GM12878 (cell line): ENCODE measurements at regions of chrX and their contacts with region 1.

Region 1: DNA sequence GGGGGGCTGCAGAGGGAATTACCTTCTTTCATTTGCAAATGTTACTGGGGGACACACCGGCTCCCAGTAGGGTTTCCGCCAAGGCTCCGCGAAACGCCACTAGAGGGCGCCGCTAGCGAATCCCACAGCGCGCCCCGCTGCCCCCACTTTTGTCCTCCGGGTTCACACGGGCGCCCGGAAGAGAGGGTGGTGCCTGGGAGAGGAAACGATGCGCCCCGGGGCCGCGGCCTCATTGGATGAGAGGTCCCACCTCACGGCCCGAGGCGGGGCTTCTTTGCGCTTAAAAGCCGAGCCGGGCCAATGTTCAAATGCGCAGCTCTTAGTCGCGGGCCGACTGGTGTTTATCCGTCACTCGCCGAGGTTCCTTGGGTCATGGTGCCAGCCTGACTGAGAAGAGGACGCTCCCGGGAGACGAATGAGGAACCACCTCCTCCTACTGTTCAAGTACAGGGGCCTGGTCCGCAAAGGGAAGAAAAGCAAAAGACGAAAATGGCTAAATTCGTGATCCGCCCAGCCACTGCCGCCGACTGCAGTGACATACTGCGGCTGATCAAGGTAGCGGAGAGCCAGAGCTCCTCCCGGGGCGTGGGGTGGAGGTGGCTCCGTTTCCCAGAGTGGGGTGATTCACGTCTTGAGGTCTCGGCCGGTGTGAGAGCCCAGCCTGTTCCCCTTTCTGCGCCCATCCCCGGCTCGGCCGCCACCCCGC is at the start of gene SAT1:
- DNase-seq: peak; percentile 65
- ATAC-seq: peak; percentile 88
- H3K4me3 ChIP-seq: peak within 1 kb of the TSS; percentile 75
- H3K27ac ChIP-seq: peak within 1 kb of the TSS; percentile 82
- H3K4me1 ChIP-seq: no peaks in the 10 kb centered on the region
- H3K27me3 ChIP-seq: no peaks in the 10 kb centered on the region
- CTCF ChIP-seq: peak; percentile 64 to 74 (median 65)
- EP300 ChIP-seq: no peak
- POLR2A ChIP-seq: peak; percentile 100
- RAD21 ChIP-seq: peak; percentile 65
- polyA plus RNA-seq, gene SAT1: 155 to 162 TPM

Region 2: GRCh38 chrX:23742697-23743622 is 40.1 kb before region 1 on chrX and contains the start of gene ACOT9:
- CTCF ChIA-PET with region 1: interaction called, 3 read pairs
- POLR2A ChIA-PET with region 1: interaction called, 12 read pairs
- RAD21 ChIA-PET with region 1: interaction called, 5 read pairs
- SMC1A ChIA-PET with region 1: interaction called, 5 read pairs
- in situ Hi-C with region 1: no loop called
- intact Hi-C with region 1: no loop called
- DNase-seq: peak; percentile 53
- ATAC-seq: peak; percentile 94
- H3K4me3 ChIP-seq: peak within 1 kb of the TSS; percentile 73
- H3K27ac ChIP-seq: peak within 1 kb of the TSS; percentile 74
- H3K4me1 ChIP-seq: no peaks in the 10 kb centered on the region
- H3K27me3 ChIP-seq: no peaks in the 10 kb centered on the region
- CTCF ChIP-seq: no peak
- EP300 ChIP-seq: no peak
- POLR2A ChIP-seq: peak; percentile 60; the same call in 1 of the 2 replicates
- RAD21 ChIP-seq: no peak
- polyA plus RNA-seq, gene ACOT9: 23.7 to 24.5 TPM